GM12878 (cell line): ENCODE measurements at regions of chr2 and their contacts with region 1.

Region 1: DNA sequence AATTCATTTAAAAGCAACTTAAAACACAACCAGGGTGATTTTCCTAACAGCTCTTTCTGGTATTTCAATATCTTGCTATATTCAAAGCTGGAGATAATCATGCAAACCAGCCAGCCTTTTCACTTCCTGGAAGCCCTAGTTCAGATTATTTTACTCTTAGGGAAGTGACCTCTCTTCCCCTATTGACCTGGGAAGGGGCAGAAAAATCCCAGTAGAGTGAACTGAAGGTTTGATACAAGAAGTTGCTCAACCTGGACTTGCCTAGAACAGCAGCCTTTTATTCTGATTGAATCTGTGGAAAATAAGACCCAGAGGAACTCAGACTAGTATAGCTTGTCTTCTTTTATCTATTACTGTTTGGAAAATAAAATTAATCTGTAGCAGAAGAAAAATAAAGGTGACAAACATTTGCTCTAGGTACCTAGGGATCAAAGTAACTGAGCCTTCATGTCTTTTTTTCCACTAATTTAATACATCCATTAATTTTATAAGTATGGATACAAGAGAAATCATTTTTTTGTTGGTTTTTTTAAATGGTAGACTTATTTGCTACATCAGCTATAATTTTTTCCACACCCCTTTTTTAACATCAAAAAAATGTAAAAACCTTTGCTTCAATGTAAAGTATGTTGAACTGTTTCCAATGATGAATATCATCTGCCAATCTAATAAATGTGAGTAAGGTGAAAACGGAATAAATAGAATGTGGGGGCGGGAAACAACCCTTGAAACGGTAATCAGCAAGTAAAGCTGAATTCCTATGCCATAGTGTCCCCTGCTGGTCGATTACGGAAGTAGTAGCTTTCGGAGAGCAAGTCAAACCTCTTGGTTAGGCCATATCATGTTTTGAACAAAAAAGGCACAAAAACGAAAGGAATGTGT is 629.9 kb downstream of the NRXN1 start:
- DNase-seq: no peak
- ATAC-seq: peak; percentile 80
- H3K4me3 ChIP-seq: no peak overlapping the region
- H3K27ac ChIP-seq: no peak overlapping the region
- H3K4me1 ChIP-seq: no peaks in the 10 kb centered on the region
- H3K27me3 ChIP-seq: no peaks in the 10 kb centered on the region
- CTCF ChIP-seq: peak; percentile 80 to 90 (median 86)
- EP300 ChIP-seq: no peak
- POLR2A ChIP-seq: no peak
- RAD21 ChIP-seq: peak; percentile 85

Region 2: DNA sequence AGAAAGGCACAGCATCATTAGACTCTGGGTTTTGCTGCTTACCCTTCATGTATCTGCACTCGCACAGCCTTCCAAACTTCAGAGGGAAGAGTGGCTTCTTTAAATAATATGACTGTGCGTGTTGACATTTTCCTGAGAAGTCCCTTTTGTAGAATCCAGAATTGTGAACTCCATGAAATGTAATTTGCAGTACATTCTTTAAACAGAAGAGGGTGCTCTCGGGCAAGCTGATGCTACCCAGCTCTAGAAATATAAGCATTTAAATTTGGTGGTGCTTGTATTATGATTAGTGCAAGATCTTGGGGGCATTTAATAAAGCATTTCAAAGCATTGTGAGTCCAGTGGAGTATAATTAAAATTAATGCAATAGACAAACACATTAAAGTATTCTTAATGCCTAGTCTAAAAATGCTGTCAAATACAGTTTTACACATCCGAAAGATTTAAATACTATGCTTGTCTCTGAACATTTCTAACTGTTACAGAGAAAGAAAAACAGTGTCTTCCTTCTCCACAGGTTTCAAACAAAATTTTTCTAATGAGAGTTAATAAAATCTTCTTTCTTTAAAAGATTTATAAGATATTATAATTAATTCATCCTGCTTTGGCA is 1801.7 kb before region 1 on chr2:
- CTCF ChIA-PET with region 1: interaction called, 8 read pairs
- POLR2A ChIA-PET with region 1: no interaction called
- RAD21 ChIA-PET with region 1: no interaction called
- SMC1A ChIA-PET with region 1: interaction called, 3 read pairs
- in situ Hi-C with region 1: no loop called
- intact Hi-C with region 1: loop called (anchors 5 kb)
- DNase-seq: no peak
- ATAC-seq: peak; percentile 77
- H3K4me3 ChIP-seq: no peak overlapping the region
- H3K27ac ChIP-seq: no peak overlapping the region
- H3K4me1 ChIP-seq: no peaks in the 10 kb centered on the region
- H3K27me3 ChIP-seq: peaks cover 0 to 2% of the 10 kb centered on the region in 2 experiments; a peak in 1 of 4 replicates
- CTCF ChIP-seq: peak; percentile 61 to 70 (median 68)
- EP300 ChIP-seq: no peak
- POLR2A ChIP-seq: no peak
- RAD21 ChIP-seq: peak; percentile 81

Region 3: GRCh38 chr2:49616800-49617199 is 785.2 kb before region 1 on chr2:
- CTCF ChIA-PET with region 1: interaction called, 11 read pairs
- POLR2A ChIA-PET with region 1: no interaction called
- RAD21 ChIA-PET with region 1: no interaction called
- SMC1A ChIA-PET with region 1: interaction called, 3 read pairs
- in situ Hi-C with region 1: no loop called
- intact Hi-C with region 1: loop called (anchors 2 kb)
- DNase-seq: no peak
- ATAC-seq: peak; percentile 65
- H3K4me3 ChIP-seq: no peak overlapping the region
- H3K27ac ChIP-seq: no peak overlapping the region
- H3K4me1 ChIP-seq: no peaks in the 10 kb centered on the region
- H3K27me3 ChIP-seq: no peaks in the 10 kb centered on the region
- CTCF ChIP-seq: peak; percentile 31 to 43 (median 37); a peak in 4 of 6 replicates
- EP300 ChIP-seq: no peak
- POLR2A ChIP-seq: no peak
- RAD21 ChIP-seq: peak; percentile 50

Region 4: DNA sequence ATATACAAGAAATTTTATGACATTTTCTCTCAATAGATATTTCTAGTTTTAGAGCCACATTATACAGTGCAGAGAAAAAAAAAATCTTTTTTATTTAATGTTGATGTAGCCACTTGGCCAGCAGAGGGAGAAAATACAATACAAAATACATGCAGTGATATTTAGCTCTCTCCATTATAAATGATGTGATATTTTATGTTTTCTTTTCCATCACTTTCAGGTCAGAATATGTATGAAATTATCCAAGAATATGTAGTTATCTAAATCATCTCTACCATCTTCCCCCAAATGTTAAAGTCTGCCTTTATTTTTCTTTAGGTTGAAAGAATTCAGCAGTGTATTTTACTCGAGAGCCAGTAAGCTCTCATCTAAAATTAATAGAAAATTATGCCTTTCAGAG is 714.1 kb before region 1 on chr2:
- CTCF ChIA-PET with region 1: interaction called, 4 read pairs
- POLR2A ChIA-PET with region 1: no interaction called
- RAD21 ChIA-PET with region 1: no interaction called
- SMC1A ChIA-PET with region 1: interaction called, 3 read pairs
- in situ Hi-C with region 1: no loop called
- intact Hi-C with region 1: loop called (anchors 10 kb)
- DNase-seq: no peak
- ATAC-seq: peak; percentile 50; the same call in 2 of the 3 replicates
- H3K4me3 ChIP-seq: no peak overlapping the region
- H3K27ac ChIP-seq: no peak overlapping the region
- H3K4me1 ChIP-seq: no peaks in the 10 kb centered on the region
- H3K27me3 ChIP-seq: no peaks in the 10 kb centered on the region
- CTCF ChIP-seq: peak in 2 of 3 experiments; percentile 2 to 11; a peak in 2 of 6 replicates
- EP300 ChIP-seq: no peak
- POLR2A ChIP-seq: no peak
- RAD21 ChIP-seq: no peak

Region 5: GRCh38 chr2:49770919-49771318 is 631.1 kb before region 1 on chr2:
- CTCF ChIA-PET with region 1: interaction called, 26 read pairs
- POLR2A ChIA-PET with region 1: no interaction called
- RAD21 ChIA-PET with region 1: interaction called, 26 read pairs
- SMC1A ChIA-PET with region 1: interaction called, 14 read pairs
- in situ Hi-C with region 1: no loop called
- intact Hi-C with region 1: loop called (anchors 2 kb)
- DNase-seq: no peak
- ATAC-seq: peak; percentile 86
- H3K4me3 ChIP-seq: no peak overlapping the region
- H3K27ac ChIP-seq: no peak overlapping the region
- H3K4me1 ChIP-seq: no peaks in the 10 kb centered on the region
- H3K27me3 ChIP-seq: no peaks in the 10 kb centered on the region
- CTCF ChIP-seq: peak; percentile 31 to 47 (median 44); a peak in 5 of 6 replicates
- EP300 ChIP-seq: no peak
- POLR2A ChIP-seq: no peak
- RAD21 ChIP-seq: peak; percentile 63

Region 6: DNA sequence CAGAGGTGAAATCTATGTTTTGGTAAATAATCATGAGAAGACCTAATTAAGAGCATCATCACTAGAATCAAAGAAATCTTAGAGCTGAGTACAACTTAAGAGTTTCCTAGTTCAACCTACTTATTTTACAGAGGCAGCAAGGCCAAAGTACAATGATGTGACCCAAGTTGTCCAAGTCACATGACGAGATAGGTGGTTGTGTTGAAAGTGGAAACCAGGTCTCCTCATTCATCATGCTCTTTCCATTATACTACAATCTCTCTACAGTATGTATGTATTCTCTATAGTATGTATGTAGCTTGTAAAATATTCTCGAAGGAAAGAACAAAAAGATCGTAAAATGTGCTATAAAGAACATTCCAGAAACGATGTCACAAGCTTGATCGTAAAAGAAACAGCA is 352.7 kb before region 1 on chr2:
- CTCF ChIA-PET with region 1: no interaction called
- POLR2A ChIA-PET with region 1: no interaction called
- RAD21 ChIA-PET with region 1: no interaction called
- SMC1A ChIA-PET with region 1: no interaction called
- in situ Hi-C with region 1: no loop called
- intact Hi-C with region 1: no loop called
- DNase-seq: no peak
- ATAC-seq: no peak
- H3K4me3 ChIP-seq: no peak overlapping the region
- H3K27ac ChIP-seq: no peak overlapping the region
- H3K4me1 ChIP-seq: no peaks in the 10 kb centered on the region
- H3K27me3 ChIP-seq: no peaks in the 10 kb centered on the region
- CTCF ChIP-seq: no peak
- EP300 ChIP-seq: no peak
- POLR2A ChIP-seq: no peak
- RAD21 ChIP-seq: no peak

Region 7: DNA sequence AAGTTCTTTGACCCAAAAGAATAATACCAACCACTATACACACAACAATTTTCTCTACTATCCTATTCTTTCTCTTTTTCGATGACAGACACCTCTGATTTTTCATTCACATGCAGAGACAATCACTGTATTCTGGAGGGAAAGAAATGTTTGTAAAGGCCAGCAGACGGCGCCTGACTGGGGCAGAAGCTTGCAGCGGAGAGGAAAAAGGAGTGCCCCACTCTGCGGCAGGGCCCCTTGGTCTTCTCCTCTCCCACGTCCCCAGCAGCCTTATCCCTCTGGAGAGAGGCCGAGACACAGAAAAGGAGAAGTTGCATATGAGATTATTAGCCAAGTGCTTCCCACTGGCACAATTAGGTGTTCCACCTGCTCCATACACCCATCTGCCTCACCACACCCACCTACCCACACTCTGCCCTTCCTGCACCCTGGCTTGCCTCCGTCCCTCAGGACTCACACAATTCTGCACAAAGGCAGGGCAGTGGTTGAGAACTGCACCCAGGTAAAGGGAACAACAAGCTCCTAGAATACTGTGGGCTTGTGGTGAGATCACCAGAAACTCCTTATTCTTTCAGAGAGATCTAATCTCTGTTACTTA is 57.4 kb before region 1 on chr2:
- CTCF ChIA-PET with region 1: no interaction called
- POLR2A ChIA-PET with region 1: no interaction called
- RAD21 ChIA-PET with region 1: no interaction called
- SMC1A ChIA-PET with region 1: no interaction called
- in situ Hi-C with region 1: no loop called
- intact Hi-C with region 1: no loop called
- DNase-seq: no peak
- ATAC-seq: peak; percentile 59
- H3K4me3 ChIP-seq: no peak overlapping the region
- H3K27ac ChIP-seq: no peak overlapping the region
- H3K4me1 ChIP-seq: no peaks in the 10 kb centered on the region
- H3K27me3 ChIP-seq: peaks cover 2 to 6% of the 10 kb centered on the region in 2 experiments
- CTCF ChIP-seq: peak in 1 of 3 experiments; percentile 17; a peak in 1 of 6 replicates
- EP300 ChIP-seq: no peak
- POLR2A ChIP-seq: no peak
- RAD21 ChIP-seq: no peak

Region 8: DNA sequence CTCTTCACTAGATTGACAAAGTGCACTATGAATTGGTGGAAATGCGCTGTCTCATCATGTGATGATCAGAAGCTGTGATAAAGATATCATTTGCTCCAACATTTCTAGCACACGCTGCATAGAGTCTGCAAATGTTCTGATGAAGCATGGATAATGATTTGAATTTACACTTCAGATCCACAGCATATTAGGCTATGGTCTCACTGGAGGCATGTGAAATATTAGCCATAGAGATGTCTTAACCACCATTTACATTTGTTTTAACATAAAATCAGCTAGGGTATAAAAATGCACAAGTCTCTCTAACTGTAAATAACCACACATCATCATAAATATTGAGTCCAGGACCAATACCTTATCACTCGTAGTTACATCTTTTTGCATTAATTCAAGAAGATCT is 13.4 kb after region 1 on chr2:
- CTCF ChIA-PET with region 1: interaction called, 20 read pairs
- POLR2A ChIA-PET with region 1: no interaction called
- RAD21 ChIA-PET with region 1: no interaction called
- SMC1A ChIA-PET with region 1: interaction called, 3 read pairs
- in situ Hi-C with region 1: no loop called
- intact Hi-C with region 1: no loop called
- DNase-seq: no peak
- ATAC-seq: no peak
- H3K4me3 ChIP-seq: no peak overlapping the region
- H3K27ac ChIP-seq: no peak overlapping the region
- H3K4me1 ChIP-seq: no peaks in the 10 kb centered on the region
- H3K27me3 ChIP-seq: no peaks in the 10 kb centered on the region
- CTCF ChIP-seq: no peak
- EP300 ChIP-seq: no peak
- POLR2A ChIP-seq: no peak
- RAD21 ChIP-seq: no peak

Region 9: DNA sequence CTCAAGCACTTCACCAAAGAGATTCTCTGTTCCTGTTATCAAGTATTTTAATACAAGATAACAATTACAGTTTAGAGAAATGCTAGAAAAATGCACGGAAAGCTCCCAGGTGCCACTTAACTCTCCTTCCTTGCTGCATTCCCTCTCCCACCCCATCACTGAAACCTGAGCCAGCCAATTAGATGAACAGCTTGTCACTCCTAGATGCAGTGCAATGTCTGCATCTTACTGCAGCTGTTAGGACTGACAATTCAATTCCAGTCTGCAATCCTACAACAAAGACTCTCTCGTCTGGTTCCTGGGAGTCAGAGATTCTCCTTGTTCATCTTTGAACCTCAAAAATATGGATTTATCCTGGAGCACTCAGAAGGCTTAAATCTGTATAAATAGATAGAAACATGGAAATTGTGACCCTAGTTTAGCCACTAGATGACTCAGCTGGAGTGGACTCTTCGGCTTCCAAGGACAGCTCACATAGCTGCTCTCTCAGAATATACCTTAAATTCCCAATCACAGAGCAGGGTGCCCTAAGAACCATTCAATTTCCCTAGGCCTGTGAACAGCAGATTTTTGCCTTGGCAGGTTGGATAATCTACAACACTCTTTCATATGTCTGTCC is 318.8 kb after region 1 on chr2:
- CTCF ChIA-PET with region 1: no interaction called
- POLR2A ChIA-PET with region 1: no interaction called
- RAD21 ChIA-PET with region 1: no interaction called
- SMC1A ChIA-PET with region 1: no interaction called
- in situ Hi-C with region 1: no loop called
- intact Hi-C with region 1: no loop called
- DNase-seq: no peak
- ATAC-seq: no peak
- H3K4me3 ChIP-seq: no peak overlapping the region
- H3K27ac ChIP-seq: no peak overlapping the region
- H3K4me1 ChIP-seq: no peaks in the 10 kb centered on the region
- H3K27me3 ChIP-seq: no peaks in the 10 kb centered on the region
- CTCF ChIP-seq: no peak
- EP300 ChIP-seq: no peak
- POLR2A ChIP-seq: no peak
- RAD21 ChIP-seq: no peak